ENCODE measurements at regions of chr14 and their contacts with region 1.

Region 1: DNA sequence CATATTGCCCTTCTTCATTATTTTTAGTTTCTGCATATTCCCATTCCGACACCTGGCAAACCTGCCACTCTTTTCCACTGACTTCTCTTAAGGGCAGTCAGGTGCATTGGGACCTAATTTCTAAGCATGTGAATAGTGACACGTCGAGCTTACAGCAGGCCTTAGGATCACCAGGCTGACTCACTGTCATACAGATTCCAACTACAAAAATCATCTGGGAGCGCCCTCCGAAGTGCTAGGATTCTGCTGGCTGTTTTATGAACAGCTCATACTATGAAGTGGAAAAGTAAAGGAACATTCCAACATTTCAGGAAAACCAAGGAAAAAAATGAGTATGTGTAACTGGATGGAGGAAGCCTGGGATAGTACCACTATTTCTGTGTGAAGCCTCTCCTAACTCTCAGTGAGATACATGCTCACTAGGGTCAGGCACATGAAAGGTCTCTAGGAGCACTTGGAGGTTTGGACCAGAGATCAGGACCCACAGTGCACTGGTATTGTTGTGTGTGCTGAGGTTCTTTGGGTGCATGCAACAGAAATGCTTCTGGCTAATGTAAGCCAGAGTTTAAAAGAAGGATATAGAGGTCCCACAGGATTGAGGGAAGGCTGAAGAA is 257.4 kb downstream of the ZFP36L1 start:
- DNase-seq: no peak
- ATAC-seq: no peak

Region 2: DNA sequence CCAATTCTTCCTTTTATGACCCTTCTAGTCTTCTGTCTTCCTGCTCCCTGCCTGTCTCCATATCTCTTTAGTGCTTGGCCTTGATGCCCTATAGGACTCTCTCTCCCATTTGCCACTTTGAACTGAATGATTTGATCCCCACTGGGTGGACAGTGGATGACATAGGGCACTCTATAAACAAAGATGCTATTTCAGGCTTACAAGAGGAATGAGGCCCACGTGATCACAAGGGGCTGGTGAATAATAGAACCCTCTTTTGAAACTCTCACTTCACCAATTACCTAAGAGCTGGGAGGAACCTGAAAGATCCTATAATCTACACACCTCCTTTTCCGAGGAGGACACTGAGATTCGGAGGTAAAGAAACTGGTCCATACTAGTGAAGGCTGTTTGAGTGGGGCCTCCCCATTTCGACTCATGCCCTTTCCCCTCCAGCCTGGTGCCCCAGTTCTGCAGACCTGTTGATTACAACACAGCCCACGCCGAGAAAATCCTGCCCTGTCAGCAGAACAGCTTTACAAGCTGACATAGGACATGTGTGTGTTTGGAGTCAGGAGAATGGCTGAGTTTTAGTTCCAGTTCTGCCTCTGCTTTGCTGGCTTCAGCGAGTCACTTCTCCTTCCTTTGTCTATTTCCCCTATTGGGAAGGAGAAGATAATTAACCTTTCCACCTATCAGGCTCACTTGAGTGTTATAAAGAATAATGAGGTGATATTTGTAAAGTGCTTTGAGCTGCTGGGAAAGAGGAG is 142.9 kb before region 1 on chr14:
- intact Hi-C with region 1: loop called in 1 of 2 experiments (anchors 10 kb)
- DNase-seq: peak; percentile 41 to 53
- ATAC-seq: no peak

Region 3: GRCh38 chr14:68506645-68507419 is 28.7 kb before region 1 on chr14:
- intact Hi-C with region 1: no loop called
- DNase-seq: peak in 1 of 2 donors; percentile 26
- ATAC-seq: peak; percentile 73